OCI-LY7 (cell line): ENCODE measurements at regions of chrX and their contacts with region 1.

Region 1: GRCh38 chrX:19544693-19545305 is 29.5 kb upstream of the MAP3K15 start:
- DNase-seq: peak; percentile 58
- H3K4me3 ChIP-seq: no peak overlapping the region
- H3K27ac ChIP-seq: no peak overlapping the region
- H3K4me1 ChIP-seq: no peaks in the 10 kb centered on the region
- CTCF ChIP-seq: peak; percentile 84

Region 2: DNA sequence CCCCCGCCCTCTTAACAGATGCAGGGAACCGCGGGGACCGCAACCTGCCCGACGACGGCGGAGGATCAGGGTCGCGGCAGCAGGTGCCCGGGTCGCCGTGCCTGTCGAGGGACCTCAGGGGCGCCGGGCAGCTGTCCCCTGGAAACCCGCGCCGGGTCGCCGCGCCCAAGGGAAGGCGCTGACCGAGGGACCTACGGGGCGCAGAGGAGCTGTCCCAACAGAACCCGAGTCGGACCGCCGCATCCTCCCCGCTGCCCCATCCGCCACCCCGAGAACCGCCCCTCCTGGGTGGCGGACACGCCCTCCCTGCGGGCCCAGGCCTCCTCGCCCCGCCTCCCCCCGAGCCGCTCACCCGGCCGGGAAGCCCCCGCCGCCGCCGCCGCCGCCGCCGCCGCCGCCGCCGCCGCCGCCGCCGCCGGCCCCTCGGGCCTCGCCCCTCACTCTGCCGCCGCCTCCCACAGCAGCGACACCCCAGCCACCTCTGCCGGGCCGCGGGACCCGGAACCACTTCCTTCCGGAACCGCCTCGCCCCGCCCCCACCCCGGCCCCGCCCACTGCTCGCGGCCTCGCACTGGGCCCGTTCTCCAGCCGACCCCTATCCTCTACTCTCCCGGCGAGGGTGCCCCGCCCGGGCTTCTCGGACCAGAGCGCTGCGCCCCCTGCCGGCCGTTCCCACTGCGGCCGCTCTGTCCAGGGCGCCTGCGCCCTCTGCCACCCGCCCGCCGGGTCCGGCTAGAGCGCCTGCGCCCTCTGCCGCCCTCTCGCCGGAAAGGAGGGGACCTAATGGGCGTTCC is 446.0 kb after region 1 on chrX and contains the start of gene BCLAF3:
- CTCF ChIA-PET with region 1: no interaction called
- POLR2A ChIA-PET with region 1: no interaction called
- intact Hi-C with region 1: loop called (anchors 5 kb)
- DNase-seq: peak; percentile 91
- H3K4me3 ChIP-seq: peak within 1 kb of the TSS; percentile 82
- H3K27ac ChIP-seq: no peak within 1 kb of the TSS
- H3K4me1 ChIP-seq: peaks cover 18% of the 10 kb centered on the region
- CTCF ChIP-seq: peak; percentile 75
- total RNA-seq, gene BCLAF3: 5.1 and 5.8 TPM in 2 replicates

Region 3: GRCh38 chrX:20066968-20067708 is 522.3 kb after region 1 on chrX:
- CTCF ChIA-PET with region 1: no interaction called
- POLR2A ChIA-PET with region 1: no interaction called
- intact Hi-C with region 1: loop called (anchors 10 kb)
- DNase-seq: peak; percentile 67
- H3K4me3 ChIP-seq: no peak overlapping the region
- H3K27ac ChIP-seq: no peak overlapping the region
- H3K4me1 ChIP-seq: peaks cover 17% of the 10 kb centered on the region
- CTCF ChIP-seq: peak; percentile 78